ENCODE measurements at regions of chr19 and their contacts with region 1.

Region 1: GRCh38 chr19:42529248-42529764 is 1.0 kb upstream of the CEACAM1 start:
- DNase-seq: peak; percentile 78
- ATAC-seq: peak; percentile 84
- H3K4me3 ChIP-seq: peak overlapping the region; percentile 67 to 83 (median 72)
- H3K27ac ChIP-seq: peak overlapping the region; percentile 74
- H3K4me1 ChIP-seq: peaks cover 49% of the 10 kb centered on the region
- H3K27me3 ChIP-seq: no peaks in the 10 kb centered on the region; a peak in 1 of 5 replicates
- CTCF ChIP-seq: peak; percentile 99
- EP300 ChIP-seq: no peak
- POLR2A ChIP-seq: no peak
- RAD21 ChIP-seq: peak; percentile 96

Region 2: DNA sequence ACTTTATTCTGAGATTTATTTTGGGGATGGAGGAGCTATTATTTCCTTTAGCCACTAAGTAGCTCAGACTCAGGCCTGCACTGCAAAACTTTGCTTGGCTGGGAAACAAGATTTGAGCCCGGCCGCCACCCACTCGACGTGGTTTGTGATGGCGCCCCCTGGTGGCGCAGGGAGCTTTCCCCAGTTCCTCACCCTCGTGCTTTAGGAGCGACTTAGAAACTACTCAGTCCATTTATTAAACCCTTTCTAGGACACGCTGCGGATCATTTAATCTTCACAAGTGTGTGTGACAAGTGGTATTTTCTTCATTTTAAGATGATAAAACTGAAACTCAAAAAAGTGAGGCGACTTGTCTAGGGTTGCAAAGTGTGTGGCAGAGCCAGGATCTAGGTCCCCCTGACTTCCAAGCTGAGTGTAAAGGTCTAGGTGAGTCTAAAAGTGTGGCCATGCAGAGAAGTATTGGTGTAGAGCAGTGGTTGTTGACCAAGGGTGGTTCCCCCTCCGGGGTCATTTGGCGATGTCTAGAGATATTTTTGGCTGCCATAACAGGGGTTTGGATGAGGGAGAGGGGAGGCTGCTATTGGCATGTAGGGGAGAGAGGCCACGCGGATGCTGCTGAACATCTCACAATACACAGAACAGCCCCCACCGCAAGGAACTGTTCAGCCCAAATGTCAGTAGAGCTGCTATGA is 88.8 kb before region 1 on chr19:
- CTCF ChIA-PET with region 1: interaction called, 18 read pairs
- POLR2A ChIA-PET with region 1: interaction called, 31 read pairs
- in situ Hi-C with region 1: no loop called
- intact Hi-C with region 1: no loop called
- DNase-seq: peak; percentile 57
- ATAC-seq: peak; percentile 42
- H3K4me3 ChIP-seq: peak overlapping the region; percentile 20 to 52 (median 32); a peak in 4 of 6 replicates
- H3K27ac ChIP-seq: peak overlapping the region; percentile 41
- H3K4me1 ChIP-seq: peaks cover 85% of the 10 kb centered on the region
- H3K27me3 ChIP-seq: no peaks in the 10 kb centered on the region
- CTCF ChIP-seq: peak; percentile 82
- EP300 ChIP-seq: no peak
- POLR2A ChIP-seq: no peak
- RAD21 ChIP-seq: 0 out of 2 replicates have a peak, but pooled peaks have one; percentile 11

Region 3: DNA sequence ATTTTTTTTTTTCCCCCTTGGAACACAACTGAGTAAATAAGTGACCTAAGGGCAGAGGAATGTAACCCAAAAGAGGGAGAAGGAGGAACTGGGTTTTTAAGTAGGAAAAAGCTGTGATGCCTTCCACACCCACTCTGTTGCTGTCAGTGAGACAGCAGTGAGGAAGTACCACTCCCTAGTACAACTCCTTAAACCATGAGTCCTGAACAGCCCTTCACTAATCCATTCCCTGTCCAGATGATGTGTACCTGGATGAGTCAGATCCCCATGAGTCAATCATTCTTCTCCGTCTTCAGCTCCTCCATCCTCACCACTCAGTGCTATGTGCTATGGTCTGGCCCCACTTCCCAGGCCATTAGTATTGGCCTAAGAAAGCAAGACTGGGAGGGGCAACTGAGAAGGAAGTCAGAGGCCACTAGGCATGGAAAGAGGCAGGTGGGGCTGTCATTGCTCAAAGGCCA is 73.7 kb before region 1 on chr19:
- CTCF ChIA-PET with region 1: interaction called, 99 read pairs
- POLR2A ChIA-PET with region 1: interaction called, 69 read pairs
- in situ Hi-C with region 1: loop called (anchors 5 kb)
- intact Hi-C with region 1: loop called (anchors 1 kb)
- DNase-seq: no peak
- ATAC-seq: peak; percentile 46; the same call in 2 of the 3 replicates
- H3K4me3 ChIP-seq: no peak overlapping the region
- H3K27ac ChIP-seq: no peak overlapping the region
- H3K4me1 ChIP-seq: peaks cover 64% of the 10 kb centered on the region
- H3K27me3 ChIP-seq: no peaks in the 10 kb centered on the region
- CTCF ChIP-seq: no peak
- EP300 ChIP-seq: no peak
- POLR2A ChIP-seq: no peak
- RAD21 ChIP-seq: no peak

Region 4: GRCh38 chr19:42480335-42481095 is 48.8 kb before region 1 on chr19:
- CTCF ChIA-PET with region 1: interaction called, 3 read pairs
- POLR2A ChIA-PET with region 1: interaction called, 10 read pairs
- in situ Hi-C with region 1: no loop called
- intact Hi-C with region 1: loop called (anchors 2 kb)
- DNase-seq: peak; percentile 93
- ATAC-seq: peak; percentile 82
- H3K4me3 ChIP-seq: no peak overlapping the region; a peak in 1 of 6 replicates
- H3K27ac ChIP-seq: peak overlapping the region; percentile 70
- H3K4me1 ChIP-seq: peaks cover 66% of the 10 kb centered on the region
- H3K27me3 ChIP-seq: no peaks in the 10 kb centered on the region
- CTCF ChIP-seq: no peak
- EP300 ChIP-seq: peak in 1 of 2 experiments; percentile 94; a peak in 2 of 4 replicates
- POLR2A ChIP-seq: no peak
- RAD21 ChIP-seq: no peak

Region 5: GRCh38 chr19:42497492-42498168 is 31.7 kb before region 1 on chr19:
- CTCF ChIA-PET with region 1: interaction called, 4 read pairs
- POLR2A ChIA-PET with region 1: interaction called, 90 read pairs
- in situ Hi-C with region 1: no loop called
- intact Hi-C with region 1: no loop called
- DNase-seq: peak; percentile 98
- ATAC-seq: peak; percentile 99
- H3K4me3 ChIP-seq: peak overlapping the region in 2 of 3 experiments; percentile 36 to 44; a peak in 3 of 6 replicates
- H3K27ac ChIP-seq: peak overlapping the region; percentile 93
- H3K4me1 ChIP-seq: peaks cover 81% of the 10 kb centered on the region
- H3K27me3 ChIP-seq: no peaks in the 10 kb centered on the region
- CTCF ChIP-seq: peak; percentile 12; the same call in 1 of the 2 replicates
- EP300 ChIP-seq: peak; percentile 43 to 81; a peak in 2 of 4 replicates
- POLR2A ChIP-seq: peak; percentile 86 to 90
- RAD21 ChIP-seq: no peak

Region 6: DNA sequence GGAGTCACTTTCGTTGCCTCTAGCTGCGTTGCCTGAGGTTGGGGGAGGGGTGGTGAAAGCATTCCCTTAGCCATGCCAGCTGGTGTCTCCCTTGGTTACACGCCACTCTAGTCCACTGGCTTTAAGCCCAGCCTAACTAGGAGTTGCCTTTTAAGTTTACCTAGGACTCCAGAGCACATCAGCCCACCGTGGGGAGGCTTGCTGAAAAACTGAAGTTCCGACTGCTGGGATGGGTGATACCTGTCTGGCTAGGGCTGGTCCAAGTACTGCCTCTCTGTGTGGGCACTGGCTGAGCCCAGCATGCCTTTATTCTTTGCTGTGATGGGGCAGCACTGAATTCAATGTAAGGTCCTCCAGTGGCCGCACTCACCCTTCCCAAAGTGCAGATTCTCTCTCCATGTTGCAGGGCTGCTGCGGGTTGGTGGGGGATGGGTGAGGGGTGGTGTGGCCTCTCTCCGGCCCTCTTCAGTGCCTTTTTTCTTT is 10.8 kb after region 1 on chr19:
- CTCF ChIA-PET with region 1: interaction called, 12 read pairs
- POLR2A ChIA-PET with region 1: interaction called, 17 read pairs
- in situ Hi-C with region 1: no loop called
- intact Hi-C with region 1: no loop called
- DNase-seq: no peak
- ATAC-seq: peak; percentile 29
- H3K4me3 ChIP-seq: no peak overlapping the region
- H3K27ac ChIP-seq: no peak overlapping the region
- H3K4me1 ChIP-seq: peaks cover 62% of the 10 kb centered on the region
- H3K27me3 ChIP-seq: no peaks in the 10 kb centered on the region
- CTCF ChIP-seq: no peak
- EP300 ChIP-seq: no peak
- POLR2A ChIP-seq: no peak
- RAD21 ChIP-seq: no peak

Region 7: DNA sequence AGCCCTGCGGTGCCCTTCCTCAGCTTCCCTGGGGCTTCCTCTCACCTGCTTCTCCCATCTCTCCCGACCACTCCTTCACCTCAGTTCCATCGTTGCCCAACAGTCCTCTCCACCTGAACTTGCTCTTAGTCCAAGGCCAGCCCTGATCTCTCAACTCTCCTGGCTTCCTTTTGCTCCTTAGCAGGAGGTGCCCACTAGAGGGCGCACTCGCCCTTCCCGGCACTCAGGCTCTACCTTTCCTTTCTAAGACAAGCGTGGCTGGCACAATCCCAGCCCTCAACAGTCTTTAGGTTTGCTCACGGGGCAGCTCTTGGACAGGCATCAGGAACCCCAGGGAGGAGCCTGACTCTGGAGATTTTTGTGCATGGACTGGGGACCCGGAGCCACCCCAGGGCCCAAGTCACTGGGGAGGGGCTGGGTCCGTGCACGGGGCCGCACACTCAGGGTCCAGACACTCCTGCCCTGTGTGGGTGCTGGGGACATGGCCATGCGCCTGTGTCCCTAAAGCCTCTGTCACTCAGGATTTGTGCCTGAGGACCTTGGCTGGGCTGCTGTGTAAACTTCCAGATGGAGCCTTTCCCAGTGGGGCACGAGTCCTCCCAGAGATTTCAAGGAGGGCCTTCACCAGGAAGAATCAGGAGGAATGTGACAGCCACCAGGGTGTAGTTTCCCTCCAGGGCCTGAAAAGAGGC is 77.5 kb after region 1 on chr19:
- CTCF ChIA-PET with region 1: no interaction called
- POLR2A ChIA-PET with region 1: no interaction called
- in situ Hi-C with region 1: no loop called
- intact Hi-C with region 1: no loop called
- DNase-seq: peak; percentile 19
- ATAC-seq: peak; percentile 81
- H3K4me3 ChIP-seq: no peak overlapping the region
- H3K27ac ChIP-seq: no peak overlapping the region
- H3K4me1 ChIP-seq: no peaks in the 10 kb centered on the region
- H3K27me3 ChIP-seq: no peaks in the 10 kb centered on the region
- CTCF ChIP-seq: peak; percentile 88
- EP300 ChIP-seq: no peak
- POLR2A ChIP-seq: no peak
- RAD21 ChIP-seq: no peak

Region 8: GRCh38 chr19:42619271-42619670 is 90.0 kb after region 1 on chr19:
- CTCF ChIA-PET with region 1: no interaction called
- POLR2A ChIA-PET with region 1: no interaction called
- in situ Hi-C with region 1: no loop called
- intact Hi-C with region 1: no loop called
- DNase-seq: no peak
- ATAC-seq: no peak
- H3K4me3 ChIP-seq: no peak overlapping the region
- H3K27ac ChIP-seq: no peak overlapping the region
- H3K4me1 ChIP-seq: no peaks in the 10 kb centered on the region
- H3K27me3 ChIP-seq: 0 out of 5 replicates have a peak, but pooled peaks cover 0 to 4% of the 10 kb centered on the region in 2 experiments
- CTCF ChIP-seq: no peak
- EP300 ChIP-seq: no peak
- POLR2A ChIP-seq: no peak
- RAD21 ChIP-seq: no peak

Measured in HepG2 (cell line).